ENCODE measurements at regions of chr10 and their contacts with region 1.

Region 1: GRCh38 chr10:29377333-29377961 is 88.6 kb downstream of the LYZL1 start:
- DNase-seq: no peak
- ATAC-seq: no peak
- H3K4me3 ChIP-seq: no peak overlapping the region
- H3K27ac ChIP-seq: no peak overlapping the region
- H3K4me1 ChIP-seq: no peaks in the 10 kb centered on the region
- H3K27me3 ChIP-seq: no peaks in the 10 kb centered on the region
- CTCF ChIP-seq: peak; percentile 81

Region 2: DNA sequence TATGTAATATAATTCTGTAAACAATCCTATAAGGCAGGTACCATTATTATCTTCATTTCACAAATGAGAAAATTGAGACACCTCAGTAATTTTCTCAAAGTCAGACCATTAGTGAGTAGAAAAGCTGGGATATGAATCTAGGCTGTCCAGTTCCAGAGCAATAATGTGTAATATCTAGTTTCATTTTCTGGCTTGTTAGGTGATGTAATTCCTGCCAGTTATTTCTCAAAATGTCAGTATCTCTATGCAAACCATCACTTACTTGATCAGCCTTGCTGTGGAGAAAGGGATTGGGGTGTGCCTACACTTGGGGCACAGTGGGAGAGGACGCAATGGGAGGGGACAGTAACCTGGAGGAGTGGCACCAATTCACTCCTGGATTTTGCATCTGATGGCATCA is 68.9 kb after region 1 on chr10:
- CTCF ChIA-PET with region 1: no interaction called
- POLR2A ChIA-PET with region 1: no interaction called
- in situ Hi-C with region 1: no loop called
- intact Hi-C with region 1: loop called (anchors 5 kb)
- DNase-seq: no peak
- ATAC-seq: no peak
- H3K4me3 ChIP-seq: no peak overlapping the region
- H3K27ac ChIP-seq: peak overlapping the region; percentile 12; the same call in 1 of the 2 replicates
- H3K4me1 ChIP-seq: no peaks in the 10 kb centered on the region
- H3K27me3 ChIP-seq: no peaks in the 10 kb centered on the region
- CTCF ChIP-seq: no peak

Measured in Panc1 (cell line).